A549 (cell line): ENCODE measurements at regions of chr17 and their contacts with region 1.

Region 1: GRCh38 chr17:33292184-33292980 is 713 bp downstream of the ASIC2 start:
- DNase-seq: peak; percentile 53 to 67
- ATAC-seq: peak; percentile 75 to 84
- H3K4me3 ChIP-seq: peak overlapping the region; percentile 57
- H3K27ac ChIP-seq: peak overlapping the region; percentile 76 to 88
- H3K4me1 ChIP-seq: no peaks in the 10 kb centered on the region; the same call in 1 of the 3 replicates
- CTCF ChIP-seq: peak; percentile 64
- EP300 ChIP-seq: no peak
- POLR2A ChIP-seq: no peak
- RAD21 ChIP-seq: peak; percentile 44 to 70

Region 2: DNA sequence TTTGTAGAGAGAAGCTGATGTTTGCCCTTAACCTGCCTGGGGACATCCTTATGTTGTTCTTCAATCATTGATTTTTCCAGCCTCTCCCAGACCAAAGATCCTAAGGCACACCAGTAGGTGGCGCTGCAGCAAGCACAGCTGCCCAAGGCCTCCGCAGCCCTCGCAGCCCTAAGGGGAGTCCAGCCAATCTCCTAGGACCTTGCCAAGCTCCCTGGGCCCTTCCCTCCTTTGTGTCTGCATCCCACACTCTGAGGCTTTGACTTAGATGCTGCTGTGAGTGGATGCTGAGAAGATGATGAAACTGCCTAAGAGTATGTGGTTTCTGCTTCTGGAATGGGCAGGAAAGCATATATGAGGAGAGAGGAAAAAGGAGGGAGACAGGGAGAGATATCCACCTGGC is 253.6 kb before region 1 on chr17:
- CTCF ChIA-PET with region 1: interaction called, 16 read pairs
- POLR2A ChIA-PET with region 1: no interaction called
- DNase-seq: peak; percentile 57 to 65
- ATAC-seq: peak; percentile 62 to 90; a peak in 5 of 6 replicates
- H3K4me3 ChIP-seq: no peak overlapping the region
- H3K27ac ChIP-seq: peak overlapping the region in 1 of 2 experiments; percentile 42; a peak in 3 of 6 replicates
- H3K4me1 ChIP-seq: peaks cover 14% of the 10 kb centered on the region
- CTCF ChIP-seq: peak; percentile 54
- EP300 ChIP-seq: no peak
- POLR2A ChIP-seq: no peak
- RAD21 ChIP-seq: peak; percentile 59 to 69

Region 3: GRCh38 chr17:33116021-33116551 is 176.3 kb before region 1 on chr17:
- CTCF ChIA-PET with region 1: interaction called, 10 read pairs
- POLR2A ChIA-PET with region 1: no interaction called
- DNase-seq: no peak
- ATAC-seq: no peak
- H3K4me3 ChIP-seq: no peak overlapping the region
- H3K27ac ChIP-seq: peak overlapping the region in 1 of 2 experiments; percentile 84; a peak in 3 of 6 replicates
- H3K4me1 ChIP-seq: peaks cover 47% of the 10 kb centered on the region
- CTCF ChIP-seq: no peak
- EP300 ChIP-seq: no peak
- POLR2A ChIP-seq: no peak
- RAD21 ChIP-seq: no peak

Region 4: GRCh38 chr17:33218657-33219601 is 73.5 kb before region 1 on chr17:
- CTCF ChIA-PET with region 1: interaction called, 10 read pairs
- POLR2A ChIA-PET with region 1: no interaction called
- DNase-seq: no peak
- ATAC-seq: peak; percentile 38 to 48; a peak in 4 of 6 replicates
- H3K4me3 ChIP-seq: no peak overlapping the region
- H3K27ac ChIP-seq: peak overlapping the region in 1 of 2 experiments; percentile 15; a peak in 2 of 6 replicates
- H3K4me1 ChIP-seq: peaks cover 19% of the 10 kb centered on the region
- CTCF ChIP-seq: no peak
- EP300 ChIP-seq: no peak
- POLR2A ChIP-seq: no peak
- RAD21 ChIP-seq: no peak

Region 5: DNA sequence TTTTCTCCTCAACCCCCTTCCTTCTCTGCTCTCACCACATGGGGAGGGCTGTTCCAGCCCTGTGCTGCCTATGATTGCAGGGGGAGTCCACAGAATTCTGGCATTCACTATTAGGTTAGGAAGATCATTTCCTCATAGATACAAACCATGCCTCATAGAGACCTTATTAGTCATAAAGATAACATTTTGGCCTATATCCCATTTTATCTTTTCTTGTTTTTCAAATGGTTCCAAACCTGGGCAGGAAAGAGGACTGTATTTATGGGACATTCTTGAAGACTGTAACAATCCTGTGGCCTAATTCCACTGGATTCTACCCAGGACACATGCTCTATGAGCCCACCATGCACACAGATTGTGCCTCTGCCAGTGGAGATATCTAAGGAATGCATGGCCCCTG is 51.0 kb before region 1 on chr17:
- CTCF ChIA-PET with region 1: interaction called, 17 read pairs
- POLR2A ChIA-PET with region 1: no interaction called
- DNase-seq: peak; percentile 18 to 33
- ATAC-seq: peak; percentile 68 to 84; a peak in 5 of 6 replicates
- H3K4me3 ChIP-seq: no peak overlapping the region
- H3K27ac ChIP-seq: peak overlapping the region; percentile 8 to 66; a peak in 3 of 6 replicates
- H3K4me1 ChIP-seq: peaks cover 26% of the 10 kb centered on the region
- CTCF ChIP-seq: no peak
- EP300 ChIP-seq: no peak
- POLR2A ChIP-seq: no peak
- RAD21 ChIP-seq: no peak

Region 6: GRCh38 chr17:33277436-33278100 is 14.8 kb before region 1 on chr17:
- CTCF ChIA-PET with region 1: interaction called, 80 read pairs
- POLR2A ChIA-PET with region 1: no interaction called
- DNase-seq: no peak
- ATAC-seq: no peak
- H3K4me3 ChIP-seq: no peak overlapping the region
- H3K27ac ChIP-seq: no peak overlapping the region
- H3K4me1 ChIP-seq: no peaks in the 10 kb centered on the region
- CTCF ChIP-seq: no peak
- EP300 ChIP-seq: no peak
- POLR2A ChIP-seq: no peak
- RAD21 ChIP-seq: no peak

Region 7: DNA sequence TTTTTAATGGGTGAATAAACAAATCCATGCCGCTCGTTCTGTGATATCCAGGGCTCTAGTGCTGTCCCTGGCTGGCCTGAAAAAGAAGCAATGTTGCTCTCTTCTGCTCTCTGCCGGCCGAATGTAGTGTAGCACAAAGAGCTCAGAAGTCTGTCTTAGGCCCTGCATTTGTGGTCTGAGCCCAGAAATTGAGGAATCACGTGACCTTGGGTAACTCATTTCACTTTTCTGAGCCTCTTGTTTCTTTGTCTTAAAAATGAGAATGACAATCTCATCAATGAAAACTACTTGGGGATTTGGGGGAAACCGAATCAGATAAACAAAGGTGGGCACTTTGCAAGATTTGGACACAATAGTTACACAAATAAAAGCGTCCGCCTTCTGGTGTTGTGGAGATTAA is 382.3 kb after region 1 on chr17:
- CTCF ChIA-PET with region 1: interaction called, 10 read pairs
- POLR2A ChIA-PET with region 1: no interaction called
- DNase-seq: peak; percentile 61 to 64
- ATAC-seq: peak; percentile 96 to 99
- H3K4me3 ChIP-seq: no peak overlapping the region
- H3K27ac ChIP-seq: no peak overlapping the region
- H3K4me1 ChIP-seq: no peaks in the 10 kb centered on the region
- CTCF ChIP-seq: peak; percentile 70
- EP300 ChIP-seq: no peak
- POLR2A ChIP-seq: no peak
- RAD21 ChIP-seq: peak; percentile 63 to 69